ENCODE measurements at regions of chr6 and their contacts with region 1.

Region 1: DNA sequence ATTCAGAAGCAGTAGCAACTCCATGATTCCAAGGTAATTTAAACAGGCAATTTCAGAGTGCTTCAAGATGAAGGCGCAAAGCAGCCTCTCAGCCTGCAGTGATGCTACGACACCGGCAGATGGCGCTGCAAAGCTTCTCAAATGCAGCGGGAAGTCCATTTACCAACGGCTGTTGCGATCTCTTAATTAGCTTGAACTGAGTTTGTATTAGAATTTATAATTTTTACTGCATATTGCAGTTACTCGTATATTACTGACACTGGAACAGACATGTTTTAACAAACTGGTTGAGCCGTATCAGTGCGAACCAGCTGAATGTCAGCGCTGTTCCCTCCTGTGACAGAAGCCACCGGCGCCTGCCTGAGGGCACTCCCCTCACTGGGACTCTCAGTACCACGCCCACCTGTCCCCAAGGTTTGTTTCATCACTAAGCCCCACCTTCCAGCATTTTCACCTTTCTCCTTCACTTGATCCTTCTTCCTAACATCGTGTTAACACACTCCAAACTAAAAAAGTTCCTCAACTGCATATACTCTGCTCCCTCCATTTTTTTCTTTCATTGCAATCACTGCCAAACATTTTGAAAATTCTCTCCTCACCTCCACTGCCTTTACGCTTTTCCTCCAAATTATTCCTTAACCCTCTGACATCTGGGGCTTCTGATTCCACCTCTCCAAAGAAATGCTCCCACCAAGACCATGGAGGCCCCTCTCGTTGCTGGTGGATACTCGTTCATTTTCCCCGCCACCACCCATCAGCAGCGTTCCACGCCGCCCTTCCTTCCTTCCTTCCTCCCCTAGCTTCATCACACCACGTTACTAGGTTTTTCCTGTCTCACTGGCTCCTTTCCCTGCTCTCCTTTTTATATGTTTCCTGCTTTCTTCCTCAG is 14.5 kb downstream of the GNL1 start:
- DNase-seq: peak; percentile 90
- ATAC-seq: peak; percentile 76
- H3K4me3 Mint-ChIP-seq: peak overlapping the region; percentile 59
- H3K27ac Mint-ChIP-seq: peak overlapping the region; percentile 79
- H3K4me1 Mint-ChIP-seq: peaks cover 40% of the 10 kb centered on the region
- H3K27me3 Mint-ChIP-seq: no peaks in the 10 kb centered on the region

Region 2: DNA sequence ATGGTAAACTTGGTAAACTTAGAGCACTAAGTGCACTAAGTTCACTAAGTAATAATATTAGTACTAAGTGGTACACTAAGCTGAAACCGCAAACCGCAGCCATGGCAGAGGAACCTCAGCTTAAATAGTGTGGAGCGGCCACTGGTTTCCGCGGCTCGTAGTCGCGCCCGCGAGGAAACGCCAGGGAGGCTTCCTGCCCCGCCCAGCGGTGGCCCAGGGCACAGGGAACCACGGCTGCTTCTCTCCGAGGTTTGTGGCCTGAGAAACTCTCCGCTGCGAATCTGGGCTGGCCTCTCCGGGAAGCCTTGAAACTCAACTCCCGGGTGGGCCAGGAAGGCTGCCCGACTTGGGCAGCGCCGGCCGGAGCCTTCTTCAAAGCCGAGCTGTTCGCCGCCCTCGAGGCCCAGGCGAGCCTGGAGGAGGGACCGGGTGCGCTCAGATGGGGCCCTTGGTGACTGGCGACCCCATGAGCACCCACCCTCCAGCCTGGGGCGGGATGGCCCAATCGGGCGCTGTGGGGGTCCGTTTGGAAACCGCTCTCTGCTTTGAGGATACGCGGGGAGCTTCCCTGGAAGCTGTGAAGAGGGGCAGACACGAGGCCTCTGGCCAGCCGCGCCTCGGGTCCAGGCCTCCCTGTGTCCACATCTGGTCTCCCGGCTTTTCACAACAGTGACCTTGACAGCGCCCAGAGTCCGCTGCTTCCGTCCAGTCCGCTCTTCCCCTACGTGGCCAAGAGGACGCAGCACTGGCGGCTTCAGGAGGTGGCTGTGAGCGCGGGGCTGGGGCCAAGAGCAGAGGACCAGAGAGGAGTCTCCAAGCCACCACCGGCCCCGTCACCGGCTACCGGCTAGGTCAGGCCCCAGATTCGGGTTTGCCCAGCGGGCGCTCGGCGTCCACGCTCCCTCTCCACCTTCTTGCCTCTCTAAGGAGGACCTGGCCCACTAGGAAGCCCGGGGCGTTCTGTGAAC is 77.8 kb before region 1 on chr6:
- CTCF ChIA-PET with region 1: interaction called, 47 read pairs
- POLR2A ChIA-PET with region 1: no interaction called
- intact Hi-C with region 1: no loop called
- DNase-seq: peak; percentile 79
- ATAC-seq: peak; percentile 48
- H3K4me3 Mint-ChIP-seq: no peak overlapping the region
- H3K27ac Mint-ChIP-seq: no peak overlapping the region
- H3K4me1 Mint-ChIP-seq: peaks cover 26% of the 10 kb centered on the region
- H3K27me3 Mint-ChIP-seq: peaks cover 79% of the 10 kb centered on the region

Region 3: GRCh38 chr6:30489081-30490025 is 52.4 kb before region 1 on chr6 and contains the start of gene HLA-E:
- CTCF ChIA-PET with region 1: interaction called, 386 read pairs
- POLR2A ChIA-PET with region 1: interaction called, 8 read pairs
- intact Hi-C with region 1: no loop called
- DNase-seq: peak; percentile 92
- ATAC-seq: peak; percentile 78
- H3K4me3 Mint-ChIP-seq: peak within 1 kb of the TSS; percentile 95
- H3K27ac Mint-ChIP-seq: peak within 1 kb of the TSS; percentile 98
- H3K4me1 Mint-ChIP-seq: peaks cover 43% of the 10 kb centered on the region
- H3K27me3 Mint-ChIP-seq: no peaks in the 10 kb centered on the region
- total RNA-seq, gene HLA-E: 451 to 502 TPM

Region 4: DNA sequence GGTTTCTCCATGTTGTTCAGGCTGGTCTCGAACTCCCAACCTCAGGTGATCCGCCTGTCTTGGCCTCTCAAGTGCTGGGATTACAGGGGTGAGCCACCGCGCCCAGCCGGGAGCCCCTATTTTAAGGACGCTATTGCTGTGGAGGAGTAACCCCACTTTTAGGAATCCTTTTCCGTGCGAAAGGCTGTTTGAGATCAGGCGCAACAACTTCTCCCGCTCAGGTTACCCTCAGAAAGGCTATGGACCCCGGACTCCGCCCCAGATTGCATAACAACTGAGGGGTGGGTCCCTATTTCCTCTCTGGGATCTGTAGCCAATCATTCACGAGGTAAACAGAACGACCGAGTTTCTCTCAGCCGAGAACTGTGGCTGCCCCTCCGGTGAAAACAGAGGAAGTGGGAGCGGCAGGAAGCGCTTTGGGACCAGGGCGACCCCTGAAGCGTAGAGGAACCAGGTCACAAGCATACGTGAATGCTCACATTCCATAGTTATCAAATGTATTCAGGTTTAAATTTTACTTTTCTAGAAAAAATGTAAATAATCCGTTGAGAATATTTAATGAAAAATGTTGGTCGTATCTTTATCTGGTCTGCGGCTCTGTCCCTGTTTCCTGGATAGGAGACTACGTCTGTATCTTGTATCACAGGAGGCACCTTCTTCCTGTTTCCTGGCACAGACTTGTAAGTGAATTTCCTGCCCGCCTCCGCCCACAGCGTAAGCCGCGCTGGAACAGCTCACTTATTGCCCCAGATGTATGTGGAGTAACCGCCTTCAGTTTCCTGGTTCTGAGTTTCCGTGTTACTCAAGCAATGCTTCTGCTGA is 25.6 kb before region 1 on chr6:
- CTCF ChIA-PET with region 1: interaction called, 39 read pairs
- POLR2A ChIA-PET with region 1: interaction called, 7 read pairs
- intact Hi-C with region 1: loop called in 1 of 2 experiments (anchors 1 kb)
- DNase-seq: peak; percentile 96
- ATAC-seq: peak; percentile 87
- H3K4me3 Mint-ChIP-seq: peak overlapping the region; percentile 74
- H3K27ac Mint-ChIP-seq: peak overlapping the region; percentile 98
- H3K4me1 Mint-ChIP-seq: peaks cover 69% of the 10 kb centered on the region
- H3K27me3 Mint-ChIP-seq: no peaks in the 10 kb centered on the region

Region 5: DNA sequence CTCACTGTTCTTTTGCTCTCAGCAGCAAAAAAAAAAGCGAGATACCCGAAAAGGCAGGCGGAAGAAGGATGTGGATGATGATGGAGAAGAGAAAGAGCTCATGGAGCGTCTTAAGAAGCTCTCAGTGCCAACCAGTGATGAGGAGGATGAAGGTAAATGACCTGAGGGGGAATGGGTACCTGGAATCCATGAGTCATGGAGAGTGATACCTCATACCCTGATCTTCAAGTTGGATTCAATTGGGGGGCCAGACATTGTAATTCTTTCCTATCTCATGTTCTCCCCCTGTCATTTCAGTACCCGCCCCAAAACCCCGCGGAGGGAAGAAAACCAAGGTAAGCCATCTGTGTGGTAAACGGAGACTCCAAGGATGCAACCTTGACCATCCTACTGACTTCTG is 36.3 kb after region 1 on chr6:
- CTCF ChIA-PET with region 1: interaction called, 10 read pairs
- POLR2A ChIA-PET with region 1: no interaction called
- intact Hi-C with region 1: no loop called
- DNase-seq: no peak
- ATAC-seq: no peak
- H3K4me3 Mint-ChIP-seq: no peak overlapping the region
- H3K27ac Mint-ChIP-seq: peak overlapping the region; percentile 74
- H3K4me1 Mint-ChIP-seq: peaks cover 36% of the 10 kb centered on the region
- H3K27me3 Mint-ChIP-seq: no peaks in the 10 kb centered on the region

Region 6: GRCh38 chr6:31087494-31088089 is 545.8 kb after region 1 on chr6:
- CTCF ChIA-PET with region 1: interaction called, 4 read pairs
- POLR2A ChIA-PET with region 1: no interaction called
- intact Hi-C with region 1: loop called in 1 of 2 experiments (anchors 2 kb)
- DNase-seq: peak; percentile 94
- ATAC-seq: peak; percentile 96
- H3K4me3 Mint-ChIP-seq: no peak overlapping the region
- H3K27ac Mint-ChIP-seq: no peak overlapping the region
- H3K4me1 Mint-ChIP-seq: peaks cover 13% of the 10 kb centered on the region
- H3K27me3 Mint-ChIP-seq: no peaks in the 10 kb centered on the region

Measured in activated CD4-positive, alpha-beta T cell treated with anti-CD3 and anti-CD28 coated beads for 36 hours (primary cell).